ENCODE measurements at regions of chr17 and their contacts with region 1.

Region 1: GRCh38 chr17:57955183-57955931 is at the start of gene CUEDC1:
- DNase-seq: no peak
- H3K4me3 ChIP-seq: peak within 1 kb of the TSS; percentile 69
- H3K27me3 ChIP-seq: no peaks in the 10 kb centered on the region
- CTCF ChIP-seq: 0 out of 2 replicates have a peak, but pooled peaks have one; percentile 26
- polyA plus RNA-seq, gene CUEDC1: 27.3 and 48.5 TPM in 2 replicates

Region 2: DNA sequence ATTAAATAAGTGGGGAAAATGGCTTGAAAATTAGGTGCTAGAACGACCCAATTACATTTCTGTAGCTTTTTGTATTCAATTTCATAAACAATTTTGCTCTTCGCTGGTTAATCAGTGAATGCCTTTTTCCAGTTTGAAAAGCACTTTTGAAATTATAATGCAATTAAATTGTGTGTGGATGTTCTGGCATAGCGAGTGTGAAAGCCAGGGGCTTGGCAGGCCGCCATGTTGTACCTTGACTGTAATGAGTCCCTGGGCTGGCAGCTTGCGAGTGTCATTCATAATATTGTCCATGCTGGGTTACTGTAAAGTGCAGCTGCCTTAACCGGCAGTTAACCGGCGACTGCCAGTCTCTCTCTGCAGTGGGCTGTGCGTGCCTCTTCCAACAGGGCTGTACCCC is 388.1 kb before region 1 on chr17:
- CTCF ChIA-PET with region 1: no interaction called
- POLR2A ChIA-PET with region 1: no interaction called
- DNase-seq: no peak
- H3K4me3 ChIP-seq: no peak overlapping the region
- H3K27me3 ChIP-seq: no peaks in the 10 kb centered on the region
- CTCF ChIP-seq: no peak

Region 3: GRCh38 chr17:57838857-57839570 is 116.3 kb before region 1 on chr17:
- CTCF ChIA-PET with region 1: no interaction called
- POLR2A ChIA-PET with region 1: no interaction called
- DNase-seq: no peak
- H3K4me3 ChIP-seq: no peak overlapping the region
- H3K27me3 ChIP-seq: no peaks in the 10 kb centered on the region
- CTCF ChIP-seq: no peak

Region 4: GRCh38 chr17:57902800-57903759 is 52.3 kb before region 1 on chr17:
- CTCF ChIA-PET with region 1: interaction called, 11 read pairs
- POLR2A ChIA-PET with region 1: no interaction called
- DNase-seq: peak; percentile 68
- H3K4me3 ChIP-seq: no peak overlapping the region
- H3K27me3 ChIP-seq: no peaks in the 10 kb centered on the region
- CTCF ChIP-seq: no peak

Region 5: DNA sequence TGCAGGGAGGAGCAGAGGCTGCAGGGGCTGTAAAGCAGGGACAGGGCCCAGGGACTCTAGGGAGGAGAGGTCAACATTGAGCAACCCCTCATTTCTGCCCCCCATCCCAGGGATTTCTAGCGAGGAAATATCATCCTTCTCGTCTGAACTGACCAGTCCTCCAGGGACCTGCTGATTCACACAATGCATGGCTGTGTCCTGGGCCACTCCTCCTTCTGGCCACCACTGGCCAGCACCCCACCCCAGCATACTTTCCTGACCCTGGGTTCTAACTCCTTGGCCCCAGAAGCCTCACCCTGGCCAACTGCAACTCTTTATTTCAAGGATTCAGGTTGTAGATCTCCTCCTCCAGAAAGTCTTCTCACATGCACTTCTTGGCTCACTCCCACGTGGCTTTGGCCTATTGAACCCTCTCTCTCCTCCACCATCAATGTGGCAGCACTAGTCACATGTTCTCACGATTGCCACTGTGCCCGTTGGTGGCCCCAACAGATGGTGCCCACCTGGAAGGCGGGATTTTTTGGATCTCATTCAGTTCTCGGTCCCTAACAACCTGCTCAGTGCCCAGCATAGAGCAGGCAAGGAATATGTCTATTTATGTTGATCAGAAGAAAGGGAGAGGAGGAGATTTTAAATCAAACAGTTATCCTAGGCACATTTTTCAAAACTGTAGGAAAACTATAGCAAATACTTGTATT is 41.6 kb before region 1 on chr17:
- CTCF ChIA-PET with region 1: no interaction called
- POLR2A ChIA-PET with region 1: no interaction called
- DNase-seq: no peak
- H3K4me3 ChIP-seq: no peak overlapping the region
- H3K27me3 ChIP-seq: no peaks in the 10 kb centered on the region
- CTCF ChIP-seq: no peak

Region 6: DNA sequence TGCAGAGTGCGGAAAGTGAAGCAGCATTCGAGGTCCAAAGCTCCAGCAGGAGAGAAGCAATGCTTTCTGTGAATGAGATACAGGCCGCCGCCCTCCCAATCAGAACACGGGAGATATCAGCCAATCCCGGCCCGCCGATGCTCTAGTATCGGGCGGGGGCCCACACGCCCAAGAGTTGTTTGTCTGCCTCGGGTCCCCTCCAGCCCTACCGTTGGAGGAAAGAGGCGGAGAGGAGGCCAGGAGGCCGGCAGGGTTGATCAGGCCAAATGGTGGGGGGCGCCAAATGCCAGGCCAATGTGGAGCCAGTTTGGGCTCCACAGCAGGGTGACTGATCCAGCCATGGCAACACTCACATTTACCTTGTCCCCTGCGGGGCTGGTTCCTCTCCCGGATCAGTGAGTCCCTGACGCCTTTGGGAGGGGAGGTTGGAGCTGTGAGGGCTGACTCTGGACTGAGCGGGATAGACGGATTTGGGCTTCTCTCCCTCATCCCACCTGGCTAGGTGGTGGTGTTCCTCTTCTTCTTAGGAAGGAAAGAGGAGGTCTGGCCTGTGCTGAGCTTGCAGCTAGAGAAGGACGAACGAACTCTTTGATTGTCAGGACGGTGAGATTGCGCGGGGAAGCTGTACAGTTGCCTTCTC is 10.3 kb after region 1 on chr17:
- CTCF ChIA-PET with region 1: interaction called, 19 read pairs
- POLR2A ChIA-PET with region 1: no interaction called
- DNase-seq: no peak
- H3K4me3 ChIP-seq: no peak overlapping the region
- H3K27me3 ChIP-seq: no peaks in the 10 kb centered on the region
- CTCF ChIP-seq: no peak

Region 7: GRCh38 chr17:58096892-58097291 is 141.5 kb after region 1 on chr17:
- CTCF ChIA-PET with region 1: no interaction called
- POLR2A ChIA-PET with region 1: no interaction called
- DNase-seq: no peak
- H3K4me3 ChIP-seq: no peak overlapping the region
- H3K27me3 ChIP-seq: no peaks in the 10 kb centered on the region
- CTCF ChIP-seq: peak; percentile 13; the same call in 1 of the 2 replicates

Measured in BJ (cell line).